Heart left ventricle (tissue), 16 donors: ENCODE measurements at regions of chr16 and their contacts with region 1.

Region 1: DNA sequence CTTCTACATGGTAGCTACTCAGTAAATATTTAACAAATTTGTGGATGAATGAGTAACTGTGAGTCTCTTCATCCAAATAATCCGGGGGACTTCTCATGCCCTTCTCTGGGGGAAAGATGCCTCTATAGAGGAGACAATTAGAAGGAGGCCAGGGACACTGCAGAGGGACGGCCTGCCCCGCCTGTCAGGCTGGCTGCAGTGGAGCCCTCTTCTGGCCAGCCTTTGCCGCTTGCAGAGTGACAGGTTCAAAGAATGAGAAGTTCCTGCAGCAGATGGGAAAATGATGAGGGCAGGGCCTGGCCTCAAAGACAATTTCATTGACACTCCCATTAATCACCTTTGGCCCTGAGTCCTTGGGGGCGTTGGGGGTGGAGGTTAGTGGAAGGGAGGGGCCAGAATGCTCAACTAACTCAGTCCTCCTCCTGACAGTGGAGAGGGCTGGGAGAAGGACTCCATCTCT is 339.0 kb downstream of the MAF start:
- DNase-seq: peak; percentile 35 to 80 (median 57)
- ATAC-seq: peak; percentile 38 to 63 (median 54)
- H3K4me3 ChIP-seq: no peak overlapping the region
- H3K27ac ChIP-seq: peak overlapping the region in 4 of 12 donors; percentile 11 to 46 (median 22)
- H3K4me1 ChIP-seq: peaks cover 0 to 28% (median 8%) of the 10 kb centered on the region in 12 donors
- H3K27me3 ChIP-seq: peaks cover 0 to 6% (median 0%) of the 10 kb centered on the region in 9 donors
- CTCF ChIP-seq: peak; percentile 29 to 68 (median 50)
- POLR2A ChIP-seq: no peak

Region 2: GRCh38 chr16:79355600-79356358 is 94.3 kb after region 1 on chr16:
- intact Hi-C with region 1: loop called in 1 of 10 experiments (anchors 5 kb)
- DNase-seq: peak in 1 of 5 donors; percentile 47
- ATAC-seq: peak in 1 of 4 donors; percentile 26
- H3K4me3 ChIP-seq: no peak overlapping the region
- H3K27ac ChIP-seq: no peak overlapping the region
- H3K4me1 ChIP-seq: peaks cover 0 to 5% (median 0%) of the 10 kb centered on the region in 12 donors
- H3K27me3 ChIP-seq: peaks cover 0 to 8% (median 0%) of the 10 kb centered on the region in 9 donors
- CTCF ChIP-seq: no peak
- POLR2A ChIP-seq: no peak